Naive thymus-derived CD4-positive, alpha-beta T cell (primary cell): ENCODE measurements at regions of chr2 and their contacts with region 1.

Region 1: DNA sequence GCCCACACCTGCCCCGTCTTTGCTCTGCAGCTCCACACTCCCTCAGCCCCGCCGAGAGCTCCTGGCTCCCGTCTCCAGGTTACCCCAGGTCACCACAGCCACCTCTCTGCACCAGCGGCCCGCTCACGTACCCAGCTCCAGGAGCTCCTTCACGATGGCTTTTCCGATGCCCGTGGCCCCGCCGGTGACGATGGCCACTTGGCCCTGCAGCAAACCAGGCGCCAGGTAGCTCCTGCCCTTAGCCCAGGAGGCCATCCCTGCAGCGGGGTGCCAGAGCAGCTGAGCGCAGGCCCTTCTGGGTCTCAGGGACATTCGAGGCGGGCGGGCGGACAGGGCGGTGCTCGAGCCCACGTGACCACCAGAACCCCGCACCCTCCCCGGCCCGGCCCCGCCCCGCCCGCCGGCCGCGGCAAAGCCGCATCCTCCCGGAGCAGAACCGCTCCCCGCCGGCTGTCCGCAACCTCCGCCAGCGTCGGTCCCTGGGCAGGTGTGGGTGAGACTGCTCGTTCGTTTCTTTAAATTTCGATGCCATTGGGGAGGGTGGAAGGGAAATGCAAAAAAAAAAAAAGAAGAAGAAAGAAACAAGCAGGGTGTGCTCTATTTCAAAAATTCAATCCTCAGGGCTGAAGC is at the starts of genes PECR and TMEM169:
- DNase-seq: peak; percentile 39 to 81 (median 62)
- ATAC-seq: peak; percentile 93
- H3K4me3 ChIP-seq: peak within 1 kb of the TSS; percentile 95
- H3K4me3 Mint-ChIP-seq: peak within 1 kb of the TSS; percentile 76 to 97 (median 94)
- H3K27ac ChIP-seq: peak within 1 kb of the TSS; percentile 77
- H3K27ac Mint-ChIP-seq: peak within 1 kb of the TSS; percentile 86 to 97 (median 95)
- H3K4me1 ChIP-seq: peaks cover 42 to 57% of the 10 kb centered on the region in 2 donors
- H3K4me1 Mint-ChIP-seq: peaks cover 47 to 76% (median 62%) of the 10 kb centered on the region in 7 donors
- H3K27me3 ChIP-seq: no peaks in the 10 kb centered on the region
- H3K27me3 Mint-ChIP-seq: no peaks in the 10 kb centered on the region
- total RNA-seq, gene PECR: 15.7 to 29.9 (median 20.6) TPM
- total RNA-seq, gene TMEM169: 2.0 to 5.1 (median 2.6) TPM

Region 2: DNA sequence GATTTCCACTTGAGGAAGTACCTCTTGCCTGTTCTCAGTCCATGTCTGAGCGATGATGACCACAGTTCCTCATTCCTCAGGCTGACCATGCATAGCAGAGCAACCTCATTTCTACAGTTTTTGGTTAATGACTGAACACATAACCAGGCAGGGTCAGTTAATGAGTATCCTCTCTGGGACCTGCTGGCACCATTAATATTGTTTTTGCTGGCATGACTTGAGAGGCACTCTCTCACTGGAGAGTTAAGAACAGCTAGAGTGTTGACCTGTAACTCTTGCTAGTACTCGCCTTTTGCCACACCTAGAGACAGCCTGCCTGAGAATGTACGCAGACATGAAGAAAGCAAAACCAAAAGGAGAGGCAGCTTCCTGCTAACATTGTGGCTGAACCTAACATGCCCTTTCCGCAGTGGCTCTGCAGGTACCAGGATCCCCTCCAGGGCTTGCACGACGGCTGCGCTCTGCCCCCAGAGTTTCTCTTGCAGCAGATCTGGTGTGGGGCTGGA is 23.9 kb before region 1 on chr2:
- CTCF ChIA-PET with region 1: interaction called, 13 read pairs
- POLR2A ChIA-PET with region 1: interaction called, 10 read pairs
- intact Hi-C with region 1: loop called (anchors 1 kb)
- DNase-seq: peak in 8 of 9 donors; percentile 48 to 76 (median 67)
- ATAC-seq: peak; percentile 96
- H3K4me3 ChIP-seq: peak overlapping the region; percentile 49
- H3K4me3 Mint-ChIP-seq: peak overlapping the region; percentile 63 to 87 (median 84)
- H3K27ac ChIP-seq: peak overlapping the region; percentile 83
- H3K27ac Mint-ChIP-seq: peak overlapping the region; percentile 94 to 100 (median 98)
- H3K4me1 ChIP-seq: peaks cover 16 to 22% of the 10 kb centered on the region in 2 donors
- H3K4me1 Mint-ChIP-seq: peaks cover 8 to 42% (median 37%) of the 10 kb centered on the region in 7 donors
- H3K27me3 ChIP-seq: no peaks in the 10 kb centered on the region
- H3K27me3 Mint-ChIP-seq: no peaks in the 10 kb centered on the region